Endothelial cell of umbilical vein (primary cell): ENCODE measurements at regions of chr3 and their contacts with region 1.

Region 1: GRCh38 chr3:138941259-138941885 is 5.6 kb downstream of the FOXL2 start:
- DNase-seq: no peak
- H3K4me3 ChIP-seq: no peak overlapping the region
- H3K27ac ChIP-seq: no peak overlapping the region
- H3K4me1 ChIP-seq: peaks cover 5% of the 10 kb centered on the region
- H3K27me3 ChIP-seq: peaks cover 85 to 99% of the 10 kb centered on the region in 2 experiments
- CTCF ChIP-seq: peak; percentile 49 to 66
- POLR2A ChIP-seq: no peak

Region 2: GRCh38 chr3:138640537-138640936 is 300.8 kb before region 1 on chr3:
- CTCF ChIA-PET with region 1: no interaction called
- POLR2A ChIA-PET with region 1: no interaction called
- dilution Hi-C with region 1: no loop called
- intact Hi-C with region 1: no loop called
- DNase-seq: no peak
- H3K4me3 ChIP-seq: no peak overlapping the region
- H3K27ac ChIP-seq: no peak overlapping the region
- H3K4me1 ChIP-seq: no peaks in the 10 kb centered on the region
- H3K27me3 ChIP-seq: no peaks in the 10 kb centered on the region
- CTCF ChIP-seq: no peak
- POLR2A ChIP-seq: no peak

Region 3: GRCh38 chr3:138974462-138974861 is 33.1 kb after region 1 on chr3:
- CTCF ChIA-PET with region 1: interaction called, 59 read pairs
- POLR2A ChIA-PET with region 1: no interaction called
- dilution Hi-C with region 1: no loop called
- intact Hi-C with region 1: loop called (anchors 1 kb)
- DNase-seq: peak; percentile 16
- H3K4me3 ChIP-seq: no peak overlapping the region
- H3K27ac ChIP-seq: no peak overlapping the region
- H3K4me1 ChIP-seq: no peaks in the 10 kb centered on the region
- H3K27me3 ChIP-seq: peaks cover 0 to 2% of the 10 kb centered on the region in 2 experiments
- CTCF ChIP-seq: no peak
- POLR2A ChIP-seq: no peak

Region 4: GRCh38 chr3:139329345-139329850 is 388.0 kb after region 1 on chr3:
- CTCF ChIA-PET with region 1: interaction called, 19 read pairs
- POLR2A ChIA-PET with region 1: no interaction called
- dilution Hi-C with region 1: no loop called
- intact Hi-C with region 1: loop called (anchors 1 kb)
- DNase-seq: peak; percentile 74
- H3K4me3 ChIP-seq: no peak overlapping the region
- H3K27ac ChIP-seq: no peak overlapping the region
- H3K4me1 ChIP-seq: peaks cover 3% of the 10 kb centered on the region
- H3K27me3 ChIP-seq: peaks cover 2 to 15% of the 10 kb centered on the region in 2 experiments
- CTCF ChIP-seq: peak; percentile 99
- POLR2A ChIP-seq: no peak

Region 5: DNA sequence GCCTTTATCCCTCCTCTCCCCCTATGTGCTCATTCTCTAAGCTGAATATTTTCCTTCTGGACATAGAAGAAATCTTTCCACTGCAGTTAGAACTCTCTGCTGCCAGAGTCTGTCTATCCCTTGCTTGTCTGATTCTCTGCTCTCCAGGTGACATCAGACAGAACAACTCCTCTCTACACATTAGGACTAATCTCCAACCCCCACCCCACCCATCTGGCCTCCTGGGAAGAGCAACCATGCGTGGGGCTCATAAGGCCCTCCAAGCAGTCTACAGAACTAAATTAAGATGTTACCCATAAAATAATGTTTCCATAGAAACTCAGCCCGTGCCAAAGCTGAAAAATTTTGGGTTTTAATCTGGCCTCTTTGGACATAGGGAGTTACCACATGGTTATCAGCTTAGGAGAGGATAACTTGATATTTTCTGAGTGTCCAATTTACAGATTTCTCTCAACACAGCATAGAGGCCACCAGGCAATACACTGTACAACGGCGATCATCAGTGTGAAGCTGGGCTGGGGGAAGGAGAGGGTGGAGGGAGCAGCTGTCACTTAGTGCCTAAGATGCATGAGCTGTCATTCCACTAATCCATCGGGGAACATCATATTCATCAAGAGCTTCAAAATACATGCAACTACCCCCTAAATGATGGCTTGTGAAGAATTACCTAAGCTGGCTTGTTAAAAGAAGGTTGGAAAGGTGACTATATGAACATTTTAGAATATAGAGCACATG is 1193.0 kb after region 1 on chr3:
- CTCF ChIA-PET with region 1: no interaction called
- POLR2A ChIA-PET with region 1: no interaction called
- dilution Hi-C with region 1: no loop called
- intact Hi-C with region 1: no loop called
- DNase-seq: no peak
- H3K4me3 ChIP-seq: no peak overlapping the region
- H3K27ac ChIP-seq: no peak overlapping the region
- H3K4me1 ChIP-seq: no peaks in the 10 kb centered on the region
- H3K27me3 ChIP-seq: no peaks in the 10 kb centered on the region
- CTCF ChIP-seq: no peak
- POLR2A ChIP-seq: no peak